Posterior cingulate gyrus (tissue), 11 donors: ENCODE measurements at regions of chr12 and their contacts with region 1.

Region 1: GRCh38 chr12:57063991-57064685 is 14.2 kb upstream of the MYO1A start:
- DNase-seq: no peak

Region 2: GRCh38 chr12:56763753-56764657 is 300.1 kb before region 1 on chr12:
- intact Hi-C with region 1: loop called (anchors 5 kb)
- DNase-seq: no peak

Region 3: DNA sequence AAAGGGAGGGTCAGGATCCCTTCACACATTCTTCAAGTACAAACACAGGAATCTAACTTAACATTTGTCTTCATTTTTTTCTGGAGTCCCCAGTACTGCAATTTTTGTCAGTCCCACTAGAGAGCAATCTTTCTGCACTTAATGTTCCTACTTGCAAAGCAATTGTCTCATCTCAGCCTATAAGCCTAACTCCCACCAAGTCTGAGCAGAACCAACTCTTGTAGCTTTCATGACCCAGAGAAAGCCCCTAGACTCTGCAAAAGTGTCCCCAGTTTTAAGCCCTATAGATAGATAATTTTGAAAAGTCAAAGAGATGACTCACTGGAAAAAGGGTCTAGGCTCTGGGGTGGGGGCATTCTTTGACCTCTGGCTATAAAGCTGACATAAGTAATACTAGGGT is 56.0 kb before region 1 on chr12:
- intact Hi-C with region 1: loop called (anchors 2 kb)
- DNase-seq: peak in 1 of 10 donors; percentile 12